H1 (cell line): ENCODE measurements at regions of chr2 and their contacts with region 1.

Region 1: GRCh38 chr2:241702132-241703031 is 543 bp downstream of the ING5 start:
- DNase-seq: peak; percentile 57 to 90
- H3K4me3 ChIP-seq: peak overlapping the region; percentile 76 to 95 (median 81)
- H3K27ac ChIP-seq: peak overlapping the region; percentile 98; the same call in 1 of the 2 replicates
- H3K4me1 ChIP-seq: peaks cover 0 to 5% (median 3%) of the 10 kb centered on the region in 4 experiments; a peak in 4 of 7 replicates
- H3K27me3 ChIP-seq: no peaks in the 10 kb centered on the region
- CTCF ChIP-seq: peak; percentile 60 to 76 (median 73)
- EP300 ChIP-seq: no peak
- POLR2A ChIP-seq: no peak; a peak in 1 of 3 replicates
- RAD21 ChIP-seq: peak; percentile 1 to 13; a peak in 1 of 4 replicates

Region 2: DNA sequence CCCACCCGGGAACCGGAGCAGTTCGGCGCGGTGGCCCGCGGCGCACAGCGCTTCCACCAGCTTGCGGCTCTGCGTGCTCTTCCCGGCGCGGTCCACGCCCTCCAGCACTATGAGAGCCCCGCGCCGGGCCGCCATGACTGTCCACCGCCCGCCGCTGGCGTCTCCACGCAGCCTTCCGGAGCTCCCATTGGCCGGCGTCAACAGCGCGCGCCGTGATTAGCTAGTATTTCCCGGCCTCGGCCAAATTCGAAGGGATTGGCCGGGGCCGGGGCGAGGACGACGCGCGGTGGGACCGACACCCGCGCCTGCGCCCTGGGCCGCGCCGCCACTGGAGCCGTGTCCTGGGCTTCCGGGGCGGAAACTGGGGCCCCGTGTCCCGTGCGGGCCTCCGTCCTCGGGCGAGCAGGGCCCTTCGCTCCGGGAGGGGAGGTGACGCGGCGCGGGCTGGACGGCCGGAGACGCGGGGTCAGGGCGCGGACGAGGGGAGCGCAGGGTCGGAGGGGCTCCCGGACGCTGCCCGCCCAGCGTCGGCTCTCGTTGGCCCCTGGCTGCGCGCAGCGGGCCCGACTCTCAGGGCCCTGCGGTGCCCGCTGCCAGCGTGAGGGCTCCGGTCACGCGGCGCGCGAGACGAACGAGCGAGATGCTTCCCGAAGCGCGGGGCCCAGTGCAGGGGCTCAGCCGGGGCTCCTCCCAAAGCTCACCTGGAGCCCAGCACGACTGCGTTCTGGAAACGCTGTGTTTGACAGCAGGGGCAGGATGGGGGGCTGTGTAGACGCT is 15.5 kb before region 1 on chr2 and contains the start of gene DTYMK:
- CTCF ChIA-PET with region 1: interaction called, 11 read pairs
- POLR2A ChIA-PET with region 1: interaction called, 265 read pairs
- DNase-seq: peak in 1 of 2 experiments; percentile 95
- H3K4me3 ChIP-seq: peak within 1 kb of the TSS; percentile 84 to 94 (median 91)
- H3K27ac ChIP-seq: peak within 1 kb of the TSS; percentile 88
- H3K4me1 ChIP-seq: peaks cover 0 to 8% (median 0%) of the 10 kb centered on the region in 4 experiments; a peak in 1 of 7 replicates
- H3K27me3 ChIP-seq: no peaks in the 10 kb centered on the region
- CTCF ChIP-seq: no peak
- EP300 ChIP-seq: peak in 1 of 2 experiments; percentile 15; a peak in 1 of 3 replicates
- POLR2A ChIP-seq: peak; percentile 89
- RAD21 ChIP-seq: no peak
- total RNA-seq, gene DTYMK: 69.9 and 70.5 TPM in 2 replicates

Region 3: GRCh38 chr2:241724259-241724974 is 22.0 kb after region 1 on chr2:
- CTCF ChIA-PET with region 1: interaction called, 8 read pairs
- POLR2A ChIA-PET with region 1: interaction called, 64 read pairs
- DNase-seq: peak in 1 of 2 experiments; percentile 71
- H3K4me3 ChIP-seq: no peak overlapping the region
- H3K27ac ChIP-seq: no peak overlapping the region
- H3K4me1 ChIP-seq: no peaks in the 10 kb centered on the region
- H3K27me3 ChIP-seq: no peaks in the 10 kb centered on the region; a peak in 1 of 7 replicates
- CTCF ChIP-seq: peak in 2 of 3 experiments; percentile 76 to 86; a peak in 3 of 4 replicates
- EP300 ChIP-seq: no peak
- POLR2A ChIP-seq: no peak
- RAD21 ChIP-seq: peak; percentile 72 to 78

Region 4: GRCh38 chr2:241734467-241735208 is 32.3 kb after region 1 on chr2 and contains the start of gene D2HGDH:
- CTCF ChIA-PET with region 1: interaction called, 6 read pairs
- POLR2A ChIA-PET with region 1: interaction called, 64 read pairs
- DNase-seq: peak; percentile 50 to 98
- H3K4me3 ChIP-seq: peak within 1 kb of the TSS; percentile 71 to 94 (median 78)
- H3K27ac ChIP-seq: peak within 1 kb of the TSS; percentile 20; the same call in 1 of the 2 replicates
- H3K4me1 ChIP-seq: peaks cover 0 to 6% (median 0%) of the 10 kb centered on the region in 4 experiments; a peak in 2 of 7 replicates
- H3K27me3 ChIP-seq: peaks cover 0 to 4% (median 3%) of the 10 kb centered on the region in 4 experiments; a peak in 4 of 7 replicates
- CTCF ChIP-seq: no peak
- EP300 ChIP-seq: no peak
- POLR2A ChIP-seq: peak in 1 of 2 experiments; percentile 58; a peak in 1 of 3 replicates
- RAD21 ChIP-seq: no peak
- total RNA-seq, gene D2HGDH: 8.1 and 8.3 TPM in 2 replicates

Region 5: DNA sequence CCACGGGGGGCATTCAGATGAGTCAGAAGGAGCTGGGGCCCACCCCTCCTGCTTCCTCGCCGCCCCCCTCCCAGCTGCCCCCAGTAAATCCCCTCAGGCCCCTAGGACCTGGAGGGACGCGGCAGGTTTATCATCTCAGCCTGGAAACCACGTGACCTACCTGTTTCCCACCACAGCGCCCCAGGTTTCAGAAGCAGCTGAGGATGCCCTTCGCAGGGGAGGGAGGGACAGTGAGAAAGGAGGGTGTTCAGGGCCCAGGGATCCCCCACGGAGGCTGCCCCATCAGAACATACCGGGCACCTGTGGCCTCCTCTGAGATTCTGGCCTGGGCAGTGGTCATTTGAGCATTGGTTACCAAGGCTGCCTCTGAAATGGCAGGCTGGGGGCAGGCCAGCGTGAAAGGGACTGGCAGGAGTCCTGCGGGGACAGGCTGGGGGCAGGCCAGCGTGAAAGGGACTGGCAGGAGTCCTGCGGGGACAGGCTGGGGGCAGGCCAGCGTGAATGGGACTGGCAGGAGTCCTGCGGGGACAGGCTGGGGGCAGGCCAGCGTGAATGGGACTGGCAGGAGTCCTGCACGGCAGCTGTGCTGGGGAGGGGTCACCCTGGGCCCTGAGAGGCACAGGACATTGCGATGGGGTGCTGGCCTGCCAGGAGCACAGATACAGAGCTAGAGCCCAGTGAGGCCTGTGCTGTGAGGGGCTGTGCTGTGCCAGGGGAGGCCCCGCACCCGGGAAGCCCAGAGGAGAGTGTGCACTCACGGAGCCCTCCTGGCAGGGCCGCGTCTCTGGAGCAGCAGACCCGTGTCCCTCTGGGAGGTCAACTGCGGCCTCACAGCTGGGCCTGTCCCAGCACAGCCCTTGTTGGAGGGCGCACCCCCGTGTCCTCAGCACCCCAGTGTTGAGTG is 108.2 kb after region 1 on chr2:
- CTCF ChIA-PET with region 1: no interaction called
- POLR2A ChIA-PET with region 1: interaction called, 11 read pairs
- DNase-seq: peak in 1 of 2 experiments; percentile 47
- H3K4me3 ChIP-seq: no peak overlapping the region
- H3K27ac ChIP-seq: no peak overlapping the region; the same call in 1 of the 2 replicates
- H3K4me1 ChIP-seq: peaks cover 0 to 9% (median 4%) of the 10 kb centered on the region in 4 experiments; a peak in 5 of 7 replicates
- H3K27me3 ChIP-seq: no peaks in the 10 kb centered on the region; a peak in 3 of 7 replicates
- CTCF ChIP-seq: no peak
- EP300 ChIP-seq: no peak
- POLR2A ChIP-seq: no peak
- RAD21 ChIP-seq: no peak

Region 6: DNA sequence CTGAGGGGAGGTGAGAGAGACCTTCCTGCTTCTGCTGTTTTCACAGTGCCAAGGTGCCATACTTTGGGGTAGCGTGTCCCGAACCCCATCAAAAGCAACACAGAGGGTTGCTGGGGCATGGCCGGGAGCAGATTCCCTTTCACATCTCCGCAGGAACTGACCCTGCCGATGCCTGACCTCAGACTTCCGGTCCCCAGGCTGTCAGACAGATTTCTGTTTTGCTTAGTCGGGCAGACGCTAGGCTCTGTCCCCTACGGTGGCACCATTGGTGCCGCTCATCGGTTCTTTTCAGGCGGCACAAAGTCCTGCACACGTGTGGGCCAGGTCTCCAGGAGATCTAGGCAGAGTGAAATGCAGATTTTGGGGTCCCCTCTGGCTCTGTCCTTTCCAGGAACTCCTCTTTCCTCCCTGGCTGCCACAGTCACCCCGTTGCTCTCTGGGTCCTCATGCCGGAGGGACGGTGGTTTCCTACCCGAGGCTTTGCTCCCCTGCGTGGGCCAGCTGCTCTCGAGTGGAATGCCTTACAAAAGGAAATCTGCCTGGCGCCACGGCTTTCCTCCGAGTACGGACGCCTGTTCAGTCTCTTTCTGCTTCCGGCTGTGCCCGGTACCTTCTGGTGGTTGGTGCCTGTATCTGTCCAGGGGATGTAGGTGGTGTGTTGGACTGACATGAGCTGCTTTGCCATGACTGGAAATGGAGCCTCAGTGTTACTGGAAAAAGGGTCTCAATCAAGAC is 206.5 kb after region 1 on chr2:
- CTCF ChIA-PET with region 1: no interaction called
- POLR2A ChIA-PET with region 1: no interaction called
- DNase-seq: peak in 1 of 2 experiments; percentile 37
- H3K4me3 ChIP-seq: no peak overlapping the region
- H3K27ac ChIP-seq: no peak overlapping the region
- H3K4me1 ChIP-seq: peaks cover 0 to 6% (median 5%) of the 10 kb centered on the region in 4 experiments; a peak in 3 of 7 replicates
- H3K27me3 ChIP-seq: no peaks in the 10 kb centered on the region
- CTCF ChIP-seq: no peak
- EP300 ChIP-seq: no peak
- POLR2A ChIP-seq: no peak
- RAD21 ChIP-seq: no peak

Region 7: DNA sequence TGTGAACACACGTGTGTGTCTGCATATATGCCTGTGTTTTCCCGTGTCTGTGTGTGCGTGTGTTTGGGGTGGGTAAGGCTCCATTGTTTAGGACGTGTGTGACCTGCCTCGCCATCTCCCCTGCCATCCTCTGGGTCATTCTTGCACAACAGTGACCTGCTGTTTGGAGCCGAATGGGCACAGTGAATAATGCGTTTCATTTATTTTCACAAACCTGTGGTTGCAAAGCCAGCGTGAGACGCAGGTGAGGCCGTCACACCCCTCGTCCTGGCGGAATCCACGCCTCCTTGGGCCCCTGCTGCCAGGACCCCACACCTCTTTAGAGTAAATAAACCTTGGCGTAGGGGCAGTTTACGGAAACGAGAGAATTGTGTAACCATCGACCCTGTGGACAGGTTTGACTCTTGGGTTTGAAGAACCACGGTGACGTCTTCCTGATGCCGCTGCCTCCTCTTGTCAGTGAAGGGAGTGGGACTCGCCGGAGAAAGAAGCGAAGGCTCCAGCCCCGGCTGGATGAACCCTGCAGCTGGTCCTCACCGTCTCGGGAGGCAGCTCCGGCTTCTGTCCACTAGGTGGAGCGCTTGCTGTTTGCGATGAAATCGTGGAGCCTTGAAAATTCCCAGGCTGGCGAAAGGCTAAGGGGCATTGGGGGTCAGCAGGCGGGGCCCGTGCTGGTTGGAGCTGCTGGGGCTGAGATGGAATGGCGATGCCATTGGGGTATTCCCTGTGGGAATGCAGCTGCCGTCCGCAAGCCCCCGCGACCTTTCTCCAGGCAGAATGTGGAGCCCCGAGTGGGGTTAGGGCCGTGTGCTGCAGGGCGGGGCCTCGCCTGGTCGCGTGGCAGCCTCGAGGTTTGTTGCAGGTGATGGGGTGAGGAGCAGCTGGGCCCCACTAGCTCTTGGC is 248.3 kb after region 1 on chr2:
- CTCF ChIA-PET with region 1: no interaction called
- POLR2A ChIA-PET with region 1: no interaction called
- DNase-seq: peak; percentile 70 to 96
- H3K4me3 ChIP-seq: no peak overlapping the region; a peak in 1 of 8 replicates
- H3K27ac ChIP-seq: no peak overlapping the region
- H3K4me1 ChIP-seq: peaks cover 0 to 11% (median 3%) of the 10 kb centered on the region in 4 experiments; a peak in 3 of 7 replicates
- H3K27me3 ChIP-seq: peaks cover 0 to 19% (median 7%) of the 10 kb centered on the region in 4 experiments; a peak in 5 of 7 replicates
- CTCF ChIP-seq: peak in 2 of 3 experiments; percentile 95 to 96; a peak in 3 of 4 replicates
- EP300 ChIP-seq: no peak
- POLR2A ChIP-seq: no peak
- RAD21 ChIP-seq: peak; percentile 98 to 99